Posterior vena cava (tissue), 2 donors: ENCODE measurements at regions of chr4 and their contacts with region 1.

Region 1: DNA sequence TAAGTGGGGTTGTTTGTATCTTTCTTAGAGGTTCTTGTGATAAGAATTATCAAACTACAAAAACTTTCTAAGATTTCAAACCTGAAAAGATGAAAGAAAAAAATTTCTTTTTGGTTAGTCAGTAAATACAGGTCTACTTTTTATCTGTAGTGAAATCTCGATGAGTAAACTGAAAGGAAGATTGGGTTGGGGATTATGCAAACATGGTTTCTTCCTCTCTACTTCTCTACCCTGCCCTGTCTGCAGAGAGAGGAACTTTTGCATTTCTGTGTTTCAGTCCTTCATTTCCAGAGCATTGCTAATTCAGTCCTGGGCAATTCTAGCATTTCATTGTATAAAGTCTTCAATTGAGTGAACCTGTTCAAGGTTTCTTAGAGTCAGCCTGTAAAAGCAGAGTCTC is 51.6 kb upstream of the IL2 start:
- DNase-seq: no peak

Region 2: DNA sequence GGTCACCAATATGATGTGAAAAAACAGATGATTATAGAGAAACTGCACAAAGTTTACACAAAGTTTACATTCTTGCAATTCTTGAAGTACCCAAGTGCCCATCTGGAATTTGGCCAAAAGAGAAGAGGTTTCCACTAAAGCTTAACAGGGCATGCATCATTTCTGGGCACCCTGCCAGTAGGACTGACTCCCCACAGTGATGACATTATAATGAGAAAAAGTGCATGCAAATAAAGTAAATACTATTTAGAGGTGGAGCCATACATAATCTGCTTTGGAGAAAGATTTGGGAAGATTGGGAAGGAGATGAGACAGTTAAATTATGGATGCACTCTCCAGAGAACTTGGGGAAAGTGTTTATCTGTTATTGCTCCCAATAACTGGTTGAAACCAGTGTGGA is 462.6 kb before region 1 on chr4:
- intact Hi-C with region 1: no loop called
- DNase-seq: no peak

Region 3: GRCh38 chr4:122525865-122526264 is 17.8 kb after region 1 on chr4:
- intact Hi-C with region 1: loop called in 1 of 2 experiments (anchors 1 kb)
- DNase-seq: no peak

Region 4: DNA sequence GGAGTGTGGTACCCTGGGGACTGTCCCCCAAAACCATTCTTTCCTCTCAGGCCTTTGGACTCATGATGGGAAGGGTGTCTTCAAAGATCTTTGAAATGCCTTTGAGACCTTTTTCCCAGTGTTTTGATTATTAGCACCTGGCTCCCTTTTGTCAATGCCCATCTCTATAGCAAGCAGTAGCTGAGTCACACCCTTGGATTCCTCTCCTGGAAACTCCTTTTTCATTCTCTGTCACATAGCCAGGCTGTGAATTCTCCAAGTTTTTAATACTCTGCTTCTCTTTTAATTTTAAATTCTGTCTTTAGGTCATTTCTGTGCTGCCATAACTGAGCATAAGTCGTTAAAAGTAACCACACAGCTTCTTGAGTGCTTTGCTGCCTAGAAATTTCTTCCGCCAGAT is 83.1 kb after region 1 on chr4:
- intact Hi-C with region 1: no loop called
- DNase-seq: no peak